ENCODE measurements at regions of chr11 and their contacts with region 1.

Region 1: DNA sequence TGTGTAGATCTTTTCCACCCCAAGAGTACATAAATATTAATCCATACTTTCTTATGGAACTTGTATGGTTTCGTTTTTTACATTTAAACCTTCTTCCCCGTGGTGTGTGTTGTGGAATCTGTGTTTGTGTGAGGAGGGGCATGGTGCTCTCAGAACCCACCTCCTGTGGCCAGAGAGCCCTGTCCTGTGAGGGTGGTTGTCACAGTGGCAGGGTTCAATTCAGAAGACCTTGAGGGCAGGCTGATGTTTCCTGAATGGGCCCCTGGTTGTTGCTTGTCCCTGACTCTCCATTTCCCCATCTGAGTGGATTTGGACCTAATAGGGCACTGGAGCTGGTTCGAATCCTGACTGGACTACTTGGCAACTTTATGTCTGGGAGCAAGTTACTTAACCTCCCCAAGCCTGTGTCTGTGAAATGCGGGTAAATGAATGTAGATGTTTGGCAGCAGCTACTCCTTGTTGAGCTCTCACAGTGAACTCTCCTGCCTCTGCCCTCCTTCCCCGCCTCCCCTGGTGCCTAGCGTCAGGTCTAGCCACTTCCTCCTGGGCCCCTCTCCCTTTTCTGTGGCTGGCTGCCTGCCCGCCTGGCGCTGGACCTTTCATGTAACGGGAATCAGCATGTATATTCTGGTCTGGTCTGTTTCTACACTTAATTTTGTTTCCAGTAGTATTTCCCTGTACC is 7.3 kb downstream of the NEAT1 start:
- DNase-seq: peak; percentile 83
- H3K4me3 Mint-ChIP-seq: peak overlapping the region; percentile 98
- H3K27ac Mint-ChIP-seq: peak overlapping the region; percentile 62
- H3K4me1 Mint-ChIP-seq: peaks cover 49% of the 10 kb centered on the region
- H3K27me3 Mint-ChIP-seq: no peaks in the 10 kb centered on the region
- CTCF ChIP-seq: no peak

Region 2: GRCh38 chr11:64960719-64961118 is 469.1 kb before region 1 on chr11:
- CTCF ChIA-PET with region 1: no interaction called
- POLR2A ChIA-PET with region 1: no interaction called
- intact Hi-C with region 1: no loop called
- DNase-seq: no peak
- H3K4me3 Mint-ChIP-seq: no peak overlapping the region
- H3K27ac Mint-ChIP-seq: no peak overlapping the region
- H3K4me1 Mint-ChIP-seq: peaks cover 8% of the 10 kb centered on the region
- H3K27me3 Mint-ChIP-seq: no peaks in the 10 kb centered on the region
- CTCF ChIP-seq: no peak

Region 3: GRCh38 chr11:65477149-65477965 is 47.5 kb after region 1 on chr11:
- CTCF ChIA-PET with region 1: no interaction called
- POLR2A ChIA-PET with region 1: interaction called, 373 read pairs
- intact Hi-C with region 1: no loop called
- DNase-seq: peak; percentile 96
- H3K4me3 Mint-ChIP-seq: peak overlapping the region; percentile 95
- H3K27ac Mint-ChIP-seq: peak overlapping the region; percentile 95
- H3K4me1 Mint-ChIP-seq: peaks cover 16% of the 10 kb centered on the region
- H3K27me3 Mint-ChIP-seq: no peaks in the 10 kb centered on the region
- CTCF ChIP-seq: no peak

Measured in MCF 10A (cell line).